Heart left ventricle (tissue), 16 donors: ENCODE measurements at regions of chr11 and their contacts with region 1.

Region 1: DNA sequence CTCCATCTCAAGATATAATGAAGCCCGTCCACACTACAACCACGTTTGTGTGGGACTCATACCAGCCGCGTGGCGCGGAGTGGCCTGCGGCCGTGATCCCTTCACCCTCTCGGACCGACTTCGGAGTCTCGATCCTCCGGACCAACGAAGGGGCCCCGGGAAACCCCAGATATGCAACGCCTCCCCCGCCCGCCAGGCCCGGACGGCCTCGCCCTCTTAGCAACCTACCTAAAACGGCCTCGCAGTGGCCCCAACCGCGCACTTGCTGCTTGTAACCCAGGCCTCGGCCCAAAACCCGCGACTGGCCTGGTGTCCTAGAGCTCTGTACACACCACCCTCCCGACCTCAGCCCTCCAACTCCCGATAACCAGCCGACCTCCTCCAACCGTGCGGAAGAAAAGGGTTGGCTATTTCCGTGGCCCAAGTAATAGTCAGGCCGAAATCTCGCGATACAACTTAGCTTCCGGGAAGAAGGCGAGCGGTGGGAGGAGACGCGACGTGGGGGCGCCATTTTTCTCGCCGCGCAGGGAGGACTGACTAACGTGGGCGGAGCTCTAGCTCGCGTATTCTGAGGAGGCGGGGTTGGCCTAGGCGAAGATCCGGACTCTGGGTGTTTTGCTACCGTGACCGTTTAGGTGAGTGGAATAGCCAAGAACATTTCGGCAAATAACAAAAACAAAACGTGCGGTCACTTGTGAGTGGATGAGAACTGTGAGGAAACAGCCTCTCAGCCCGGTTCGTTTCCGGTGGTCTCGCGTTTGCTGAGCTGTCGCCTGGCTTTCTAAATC is at the starts of genes C11orf54 and TAF1D:
- DNase-seq: peak; percentile 98
- ATAC-seq: peak; percentile 96 to 98 (median 97)
- H3K4me3 ChIP-seq: peak within 1 kb of the TSS; percentile 57 to 92 (median 80)
- H3K27ac ChIP-seq: peak within 1 kb of the TSS; percentile 86 to 96 (median 94)
- H3K4me1 ChIP-seq: peaks cover 0 to 60% (median 50%) of the 10 kb centered on the region in 12 donors
- H3K27me3 ChIP-seq: no peaks in the 10 kb centered on the region
- CTCF ChIP-seq: peak in 4 of 12 donors; percentile 6 to 31 (median 12)
- POLR2A ChIP-seq: peak in 1 of 2 donors; percentile 83
- total RNA-seq, gene C11orf54: 23.7 to 46.2 (median 28.6) TPM
- total RNA-seq, gene TAF1D: 17.0 to 52.5 (median 36.7) TPM

Region 2: GRCh38 chr11:93340223-93340622 is 401.1 kb before region 1 on chr11:
- intact Hi-C with region 1: no loop called
- DNase-seq: no peak
- ATAC-seq: no peak
- H3K4me3 ChIP-seq: no peak overlapping the region
- H3K27ac ChIP-seq: no peak overlapping the region
- H3K4me1 ChIP-seq: no peaks in the 10 kb centered on the region
- H3K27me3 ChIP-seq: no peaks in the 10 kb centered on the region
- CTCF ChIP-seq: no peak
- POLR2A ChIP-seq: no peak

Region 3: GRCh38 chr11:93591247-93591898 is 149.9 kb before region 1 on chr11:
- intact Hi-C with region 1: no loop called
- DNase-seq: no peak
- ATAC-seq: no peak
- H3K4me3 ChIP-seq: no peak overlapping the region
- H3K27ac ChIP-seq: no peak overlapping the region
- H3K4me1 ChIP-seq: no peaks in the 10 kb centered on the region
- H3K27me3 ChIP-seq: no peaks in the 10 kb centered on the region
- CTCF ChIP-seq: no peak
- POLR2A ChIP-seq: no peak

Region 4: DNA sequence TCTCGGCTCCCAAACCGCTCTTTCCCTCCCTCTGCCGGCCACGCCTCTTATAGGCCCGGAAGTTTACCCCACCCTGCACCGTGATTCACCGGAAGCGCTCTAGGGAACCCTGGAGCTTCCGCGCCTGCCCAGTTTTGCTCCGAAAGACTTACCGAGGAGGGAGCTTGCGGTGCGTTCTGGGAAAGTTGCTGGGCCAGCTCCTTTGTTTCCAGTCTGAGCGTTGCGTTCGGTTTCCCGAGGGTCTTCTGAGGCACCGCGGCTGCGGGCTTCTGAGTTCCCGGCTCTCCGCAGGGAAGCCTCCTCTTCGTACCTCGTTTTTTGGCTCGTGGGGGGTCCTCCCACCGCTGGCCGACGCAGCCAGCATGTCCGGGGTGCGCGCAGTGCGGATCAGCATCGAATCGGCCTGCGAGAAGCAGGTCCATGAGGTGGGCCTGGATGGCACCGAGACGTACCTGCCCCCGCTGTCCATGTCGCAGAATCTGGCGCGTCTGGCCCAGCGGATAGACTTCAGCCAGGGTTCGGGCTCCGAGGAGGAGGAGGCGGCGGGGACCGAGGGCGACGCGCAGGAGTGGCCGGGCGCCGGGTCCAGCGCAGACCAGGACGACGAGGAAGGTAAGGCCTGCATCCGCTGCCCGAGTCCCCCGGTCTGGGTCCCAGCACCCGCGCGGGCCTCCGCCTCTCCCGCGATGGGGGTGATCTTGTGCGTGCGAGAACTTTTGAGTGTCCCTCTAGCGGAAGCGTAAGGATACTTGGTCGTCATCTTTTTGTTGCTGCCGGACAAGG is 43.1 kb after region 1 on chr11 and contains the start of gene MED17:
- intact Hi-C with region 1: loop called in 9 of 10 experiments (anchors 1 to 5 kb)
- DNase-seq: peak; percentile 93 to 95 (median 95)
- ATAC-seq: peak; percentile 99 to 100 (median 100)
- H3K4me3 ChIP-seq: peak within 1 kb of the TSS; percentile 75 to 98 (median 88)
- H3K27ac ChIP-seq: peak within 1 kb of the TSS; percentile 84 to 98 (median 95)
- H3K4me1 ChIP-seq: peaks cover 0 to 36% (median 30%) of the 10 kb centered on the region in 12 donors
- H3K27me3 ChIP-seq: no peaks in the 10 kb centered on the region
- CTCF ChIP-seq: peak; percentile 12 to 71 (median 45)
- POLR2A ChIP-seq: peak in 1 of 2 donors; percentile 83
- total RNA-seq, gene MED17: 14.6 to 28.6 (median 16.1) TPM

Region 5: DNA sequence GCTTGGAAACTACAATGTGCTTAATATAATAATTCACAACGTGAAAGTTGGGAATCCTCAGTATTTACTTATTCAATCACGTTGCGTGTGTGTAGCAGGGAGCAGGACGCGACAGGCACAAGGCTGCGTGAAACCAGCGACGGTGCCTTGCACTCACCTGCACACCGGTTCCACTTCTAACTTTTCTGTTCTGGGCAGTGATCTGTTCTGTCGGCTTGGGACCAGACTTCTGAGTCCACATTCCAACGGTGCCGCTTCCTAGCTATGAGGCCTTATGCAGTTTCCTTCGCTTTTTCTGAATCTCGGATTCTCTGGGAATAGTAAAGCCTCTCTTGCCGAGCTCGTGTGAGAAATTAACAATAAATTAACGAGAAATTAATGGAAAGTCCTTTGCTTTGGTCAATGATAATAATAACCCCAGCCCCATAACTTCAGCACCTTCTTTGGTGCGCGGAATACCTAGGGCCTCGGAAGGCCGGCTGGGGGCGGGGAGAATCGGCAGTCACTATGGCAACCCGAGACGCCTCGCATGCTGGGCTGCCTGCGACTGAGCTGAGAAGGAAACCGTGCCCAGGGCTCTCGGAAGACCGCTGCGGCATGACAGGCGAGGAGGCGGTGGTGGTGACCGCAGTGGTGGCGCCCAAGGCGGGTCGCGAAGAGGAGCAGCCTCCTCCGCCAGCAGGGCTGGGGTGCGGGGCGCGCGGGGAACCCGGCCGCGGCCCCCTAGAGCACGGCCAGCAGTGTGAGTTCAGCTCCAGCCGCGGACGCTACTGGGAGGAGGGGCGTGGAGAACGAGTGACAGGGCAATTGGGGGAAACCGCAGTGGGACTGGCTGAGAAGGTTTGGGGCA is 770.9 kb after region 1 on chr11 and contains the start of gene C11orf97:
- intact Hi-C with region 1: no loop called
- DNase-seq: peak; percentile 37 to 80 (median 60)
- ATAC-seq: peak in 3 of 4 donors; percentile 69 to 91 (median 89)
- H3K4me3 ChIP-seq: peak within 1 kb of the TSS; percentile 32 to 64 (median 52)
- H3K27ac ChIP-seq: no peak within 1 kb of the TSS
- H3K4me1 ChIP-seq: peaks cover 0 to 16% (median 4%) of the 10 kb centered on the region in 12 donors
- H3K27me3 ChIP-seq: peaks cover 0 to 8% (median 0%) of the 10 kb centered on the region in 9 donors
- CTCF ChIP-seq: no peak
- POLR2A ChIP-seq: no peak
- total RNA-seq, gene C11orf97: not detected